PC-9 (cell line): ENCODE measurements at regions of chr22 and their contacts with region 1.

Region 1: GRCh38 chr22:36144886-36145541 is 15.5 kb downstream of the APOL3 start:
- DNase-seq: peak; percentile 51 to 63
- H3K4me3 ChIP-seq: no peak overlapping the region
- H3K27ac ChIP-seq: no peak overlapping the region
- H3K4me1 ChIP-seq: no peaks in the 10 kb centered on the region
- H3K27me3 ChIP-seq: peaks cover 17% of the 10 kb centered on the region
- CTCF ChIP-seq: peak; percentile 77

Region 2: DNA sequence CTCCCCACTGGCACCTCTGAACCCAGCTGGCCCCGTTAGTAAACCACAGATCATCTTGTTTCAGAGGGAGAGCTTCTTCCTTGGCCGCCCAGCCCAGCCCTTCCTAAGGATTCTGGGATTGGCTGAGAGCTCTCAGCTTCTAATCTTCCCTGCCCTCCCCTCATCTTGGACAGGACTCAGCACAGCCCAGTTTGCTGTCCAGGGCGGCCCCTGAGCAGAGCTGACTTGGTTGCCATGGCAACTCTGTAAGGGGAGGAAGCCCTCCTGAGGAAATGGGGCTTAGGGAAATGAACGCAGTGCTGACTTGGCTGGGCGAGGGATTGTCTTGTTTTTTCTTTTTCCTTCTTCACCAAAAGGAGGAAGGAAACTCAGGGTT is 52.0 kb after region 1 on chr22:
- CTCF ChIA-PET with region 1: no interaction called
- POLR2A ChIA-PET with region 1: no interaction called
- intact Hi-C with region 1: no loop called
- DNase-seq: no peak
- H3K4me3 ChIP-seq: no peak overlapping the region
- H3K27ac ChIP-seq: no peak overlapping the region
- H3K4me1 ChIP-seq: no peaks in the 10 kb centered on the region
- H3K27me3 ChIP-seq: peaks cover 8% of the 10 kb centered on the region; the same call in 1 of the 2 replicates
- CTCF ChIP-seq: no peak

Region 3: DNA sequence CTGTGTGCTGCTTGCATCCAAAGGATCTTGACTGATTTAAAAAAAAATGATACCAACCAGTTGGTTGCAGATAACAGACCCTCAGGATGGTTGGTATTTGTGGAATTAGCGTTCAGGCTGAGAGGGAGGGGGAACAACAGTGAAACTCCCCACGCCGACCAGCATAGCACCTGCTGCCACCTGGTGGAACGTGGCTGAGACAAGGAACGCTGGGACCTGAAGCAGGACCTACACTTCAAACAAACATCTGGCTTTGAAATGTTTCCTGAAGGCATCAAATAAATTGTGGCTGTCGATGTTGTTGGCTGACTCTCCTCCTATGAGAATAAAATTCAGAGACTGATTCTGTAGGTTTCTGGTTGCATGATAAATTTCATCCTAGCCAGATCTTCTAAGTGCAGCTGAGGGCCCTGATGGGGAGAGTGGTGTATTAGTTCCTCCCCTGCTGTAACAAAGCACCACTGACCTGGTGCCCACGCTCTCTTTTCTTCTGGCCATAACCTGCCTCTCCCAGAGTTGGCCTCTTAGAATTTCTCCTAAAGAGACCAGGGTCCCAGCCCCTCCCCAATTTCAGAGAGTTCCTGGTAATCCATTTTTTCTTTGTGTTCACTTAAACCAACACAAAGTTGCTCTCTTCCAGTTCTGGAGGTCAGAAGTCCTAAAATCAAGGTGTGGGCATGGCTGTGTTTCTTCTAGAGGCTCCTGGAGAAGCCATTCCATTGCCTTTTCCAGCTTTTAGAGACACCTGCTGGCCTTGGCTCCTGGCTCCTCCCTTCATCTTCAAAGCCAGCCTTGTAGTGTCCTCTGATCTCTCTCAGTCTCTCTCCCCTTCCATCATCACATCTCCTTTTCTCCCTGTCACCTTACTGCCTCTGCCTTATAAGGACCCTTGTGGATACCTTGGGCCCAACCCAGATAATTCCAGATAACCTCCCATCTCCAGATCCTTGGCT is 77.1 kb after region 1 on chr22:
- CTCF ChIA-PET with region 1: interaction called, 4 read pairs
- POLR2A ChIA-PET with region 1: no interaction called
- intact Hi-C with region 1: loop called (anchors 5 kb)
- DNase-seq: peak in 1 of 2 experiments; percentile 52
- H3K4me3 ChIP-seq: no peak overlapping the region
- H3K27ac ChIP-seq: no peak overlapping the region
- H3K4me1 ChIP-seq: no peaks in the 10 kb centered on the region
- H3K27me3 ChIP-seq: no peaks in the 10 kb centered on the region; the same call in 1 of the 2 replicates
- CTCF ChIP-seq: peak; percentile 74

Region 4: DNA sequence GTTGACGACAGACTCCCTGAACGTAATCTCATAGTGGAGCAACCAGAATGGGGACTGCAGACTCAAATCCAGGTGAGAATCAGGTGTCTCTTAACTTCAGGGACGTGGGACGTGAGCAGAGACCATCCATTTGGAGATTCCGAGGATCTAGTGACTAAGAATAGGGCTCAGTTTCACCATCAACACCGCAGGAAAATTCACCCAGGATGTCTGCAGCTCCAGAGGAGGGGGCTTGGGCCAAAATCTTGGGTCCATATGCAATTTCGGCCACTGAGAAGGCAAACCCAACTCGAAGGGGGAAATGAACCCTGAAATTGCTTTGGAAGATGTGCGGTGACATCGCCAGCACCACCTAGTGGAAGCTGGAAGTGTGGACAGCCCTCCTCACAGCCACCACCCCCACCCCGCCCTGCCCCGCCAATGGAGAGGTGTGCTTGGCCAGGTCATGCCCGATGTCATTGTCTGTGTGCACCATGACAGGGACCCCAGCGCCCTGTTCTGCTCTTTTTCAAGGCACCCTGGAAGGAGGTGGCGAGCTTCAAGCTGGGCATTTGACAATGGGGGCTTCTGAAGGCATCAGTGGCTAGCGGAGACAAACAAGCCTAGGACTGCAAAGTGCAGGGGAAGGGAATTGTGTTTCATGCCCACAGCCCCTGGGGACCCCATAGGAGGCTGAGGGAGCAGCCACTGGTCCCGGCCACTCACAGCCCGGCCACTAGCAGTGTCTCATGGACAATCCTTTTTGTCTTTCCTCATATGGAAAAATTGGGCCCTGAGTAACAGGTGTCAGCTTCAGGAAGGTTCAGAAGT is 132.7 kb after region 1 on chr22:
- CTCF ChIA-PET with region 1: no interaction called
- POLR2A ChIA-PET with region 1: no interaction called
- intact Hi-C with region 1: loop called (anchors 2 kb)
- DNase-seq: peak; percentile 59 to 62
- H3K4me3 ChIP-seq: no peak overlapping the region
- H3K27ac ChIP-seq: no peak overlapping the region
- H3K4me1 ChIP-seq: no peaks in the 10 kb centered on the region
- H3K27me3 ChIP-seq: no peaks in the 10 kb centered on the region
- CTCF ChIP-seq: peak; percentile 91